ENCODE measurements at regions of chr7 and their contacts with region 1.

Region 1: GRCh38 chr7:3592401-3593135 is 291.5 kb downstream of the SDK1 start:
- DNase-seq: peak; percentile 41
- ATAC-seq: peak; percentile 92
- H3K4me3 ChIP-seq: peak overlapping the region; percentile 34 to 60
- H3K27ac ChIP-seq: peak overlapping the region; percentile 98
- H3K4me1 ChIP-seq: peaks cover 57% of the 10 kb centered on the region
- H3K27me3 ChIP-seq: no peaks in the 10 kb centered on the region
- CTCF ChIP-seq: peak; percentile 74

Region 2: GRCh38 chr7:2779086-2779485 is 813.5 kb before region 1 on chr7:
- CTCF ChIA-PET with region 1: no interaction called
- POLR2A ChIA-PET with region 1: interaction called, 13 read pairs
- in situ Hi-C with region 1: no loop called
- intact Hi-C with region 1: no loop called
- DNase-seq: no peak
- ATAC-seq: no peak
- H3K4me3 ChIP-seq: no peak overlapping the region
- H3K27ac ChIP-seq: no peak overlapping the region
- H3K4me1 ChIP-seq: no peaks in the 10 kb centered on the region
- H3K27me3 ChIP-seq: no peaks in the 10 kb centered on the region
- CTCF ChIP-seq: no peak

Region 3: DNA sequence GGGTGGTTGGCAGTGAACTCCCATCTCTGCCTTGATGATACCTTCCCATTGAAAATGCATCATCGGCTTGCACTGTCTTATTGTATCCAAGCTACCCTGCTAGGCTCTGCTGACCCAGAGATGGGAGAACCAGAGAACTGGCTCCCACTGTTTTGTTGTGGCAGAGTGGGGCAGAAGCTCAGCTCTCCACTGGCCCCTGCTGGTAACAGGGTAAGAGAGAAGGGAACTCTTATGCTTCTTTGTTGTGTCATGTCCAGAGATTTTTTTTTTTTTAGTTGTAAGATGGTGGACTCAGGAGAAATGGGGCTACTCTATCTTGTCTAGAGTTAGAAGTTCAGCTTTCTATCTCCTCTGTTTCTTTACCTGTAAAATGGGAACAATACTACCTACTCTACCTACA is 392.1 kb before region 1 on chr7:
- CTCF ChIA-PET with region 1: no interaction called
- POLR2A ChIA-PET with region 1: no interaction called
- in situ Hi-C with region 1: no loop called
- intact Hi-C with region 1: no loop called
- DNase-seq: no peak
- ATAC-seq: no peak
- H3K4me3 ChIP-seq: no peak overlapping the region
- H3K27ac ChIP-seq: no peak overlapping the region
- H3K4me1 ChIP-seq: no peaks in the 10 kb centered on the region
- H3K27me3 ChIP-seq: no peaks in the 10 kb centered on the region
- CTCF ChIP-seq: no peak; the same call in 1 of the 2 replicates

Region 4: GRCh38 chr7:3244241-3244814 is 348.2 kb before region 1 on chr7:
- CTCF ChIA-PET with region 1: interaction called, 16 read pairs
- POLR2A ChIA-PET with region 1: interaction called, 3 read pairs
- in situ Hi-C with region 1: no loop called
- intact Hi-C with region 1: no loop called
- DNase-seq: peak; percentile 84
- ATAC-seq: peak; percentile 92
- H3K4me3 ChIP-seq: peak overlapping the region; percentile 20 to 58
- H3K27ac ChIP-seq: peak overlapping the region; percentile 91
- H3K4me1 ChIP-seq: peaks cover 45% of the 10 kb centered on the region
- H3K27me3 ChIP-seq: no peaks in the 10 kb centered on the region
- CTCF ChIP-seq: no peak

Region 5: DNA sequence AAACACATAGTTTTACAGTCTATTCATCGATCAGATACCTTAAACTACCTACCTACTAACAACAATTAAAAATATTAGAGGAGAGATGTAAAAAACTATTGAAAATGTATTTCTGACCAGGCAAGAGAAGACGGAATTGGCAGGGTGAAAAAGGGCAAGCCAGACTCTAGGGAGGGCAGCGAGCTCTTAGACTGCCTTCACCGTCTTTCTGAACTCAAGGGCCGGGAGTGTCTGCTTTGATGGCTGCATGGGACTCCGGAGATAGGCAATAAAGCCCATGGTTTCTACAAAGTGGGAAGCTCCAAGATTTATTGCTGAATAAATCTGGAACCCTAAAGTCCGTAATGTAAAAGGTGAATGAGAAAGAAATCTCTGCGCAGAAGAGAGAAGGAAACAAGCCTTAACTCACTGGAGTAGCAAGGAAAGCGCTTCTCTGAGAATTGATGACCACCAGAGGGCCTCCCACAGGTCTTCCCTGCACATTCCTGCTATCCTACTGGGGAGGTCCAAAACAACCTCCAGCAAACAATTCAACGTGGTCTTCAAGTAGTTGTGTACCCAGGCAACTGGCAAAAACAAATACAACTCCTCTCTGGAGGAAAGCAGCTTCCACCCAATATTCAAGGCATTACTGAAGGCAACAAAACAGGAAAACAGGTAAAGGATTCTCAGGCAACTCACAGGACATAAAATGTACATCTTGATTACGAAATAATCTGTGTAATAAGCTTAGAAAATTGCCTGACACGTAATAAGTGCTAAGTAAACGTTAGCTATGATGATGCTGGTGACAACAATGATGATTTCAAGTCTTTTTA is 110.2 kb before region 1 on chr7:
- CTCF ChIA-PET with region 1: interaction called, 6 read pairs
- POLR2A ChIA-PET with region 1: no interaction called
- in situ Hi-C with region 1: no loop called
- intact Hi-C with region 1: loop called (anchors 5 kb)
- DNase-seq: peak; percentile 70
- ATAC-seq: peak; percentile 94
- H3K4me3 ChIP-seq: no peak overlapping the region
- H3K27ac ChIP-seq: peak overlapping the region; percentile 67
- H3K4me1 ChIP-seq: peaks cover 14% of the 10 kb centered on the region
- H3K27me3 ChIP-seq: no peaks in the 10 kb centered on the region
- CTCF ChIP-seq: peak; percentile 92

Region 6: GRCh38 chr7:3616306-3616705 is 23.7 kb after region 1 on chr7:
- CTCF ChIA-PET with region 1: no interaction called
- POLR2A ChIA-PET with region 1: interaction called, 11 read pairs
- in situ Hi-C with region 1: no loop called
- intact Hi-C with region 1: no loop called
- DNase-seq: no peak
- ATAC-seq: no peak
- H3K4me3 ChIP-seq: no peak overlapping the region
- H3K27ac ChIP-seq: no peak overlapping the region
- H3K4me1 ChIP-seq: peaks cover 13% of the 10 kb centered on the region
- H3K27me3 ChIP-seq: no peaks in the 10 kb centered on the region
- CTCF ChIP-seq: no peak

Region 7: GRCh38 chr7:4103352-4104091 is 511.0 kb after region 1 on chr7:
- CTCF ChIA-PET with region 1: no interaction called
- POLR2A ChIA-PET with region 1: no interaction called
- in situ Hi-C with region 1: no loop called
- intact Hi-C with region 1: no loop called
- DNase-seq: no peak
- ATAC-seq: no peak
- H3K4me3 ChIP-seq: no peak overlapping the region
- H3K27ac ChIP-seq: no peak overlapping the region
- H3K4me1 ChIP-seq: no peaks in the 10 kb centered on the region
- H3K27me3 ChIP-seq: no peaks in the 10 kb centered on the region
- CTCF ChIP-seq: no peak